Transverse colon (tissue), 4 donors: ENCODE measurements at regions of chr2 and their contacts with region 1.

Region 1: GRCh38 chr2:27442920-27443282 is 720 bp downstream of the KRTCAP3 start:
- DNase-seq: peak; percentile 33
- H3K4me3 ChIP-seq: peak overlapping the region; percentile 7 to 53 (median 38)
- H3K27ac ChIP-seq: peak overlapping the region; percentile 71 to 85 (median 80)
- H3K4me1 ChIP-seq: peaks cover 3 to 28% (median 14%) of the 10 kb centered on the region in 4 donors
- H3K27me3 ChIP-seq: no peaks in the 10 kb centered on the region
- CTCF ChIP-seq: no peak
- EP300 ChIP-seq: no peak
- POLR2A ChIP-seq: no peak

Region 2: DNA sequence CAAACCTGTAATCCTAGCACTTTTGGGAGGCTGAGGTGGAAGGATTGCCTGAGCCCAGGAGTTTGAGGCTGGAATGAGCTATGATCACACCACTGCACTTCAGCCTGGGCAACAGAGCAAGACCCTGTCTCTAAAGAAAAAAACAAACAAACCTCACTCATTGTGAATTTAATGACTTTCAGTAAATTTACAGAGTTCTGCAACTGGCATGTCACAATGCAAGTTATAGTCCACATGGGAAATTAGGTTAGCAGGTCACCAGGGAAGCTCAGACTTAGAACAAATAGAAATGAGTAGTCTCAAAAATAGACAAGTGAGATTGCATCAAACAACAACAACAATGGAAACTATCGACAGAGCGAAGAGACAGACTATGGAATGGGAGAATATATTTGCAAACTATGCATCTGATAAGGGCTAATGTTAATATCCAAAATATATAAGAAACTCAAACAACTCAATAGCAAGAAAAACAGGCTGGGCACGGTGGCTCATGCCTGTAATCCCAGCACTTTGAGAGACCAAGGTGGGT is 21.1 kb before region 1 on chr2:
- in situ Hi-C with region 1: no loop called
- intact Hi-C with region 1: loop called (anchors 1 kb)
- DNase-seq: no peak
- H3K4me3 ChIP-seq: no peak overlapping the region
- H3K27ac ChIP-seq: no peak overlapping the region
- H3K4me1 ChIP-seq: no peaks in the 10 kb centered on the region
- H3K27me3 ChIP-seq: no peaks in the 10 kb centered on the region
- CTCF ChIP-seq: no peak
- EP300 ChIP-seq: no peak
- POLR2A ChIP-seq: no peak

Region 3: DNA sequence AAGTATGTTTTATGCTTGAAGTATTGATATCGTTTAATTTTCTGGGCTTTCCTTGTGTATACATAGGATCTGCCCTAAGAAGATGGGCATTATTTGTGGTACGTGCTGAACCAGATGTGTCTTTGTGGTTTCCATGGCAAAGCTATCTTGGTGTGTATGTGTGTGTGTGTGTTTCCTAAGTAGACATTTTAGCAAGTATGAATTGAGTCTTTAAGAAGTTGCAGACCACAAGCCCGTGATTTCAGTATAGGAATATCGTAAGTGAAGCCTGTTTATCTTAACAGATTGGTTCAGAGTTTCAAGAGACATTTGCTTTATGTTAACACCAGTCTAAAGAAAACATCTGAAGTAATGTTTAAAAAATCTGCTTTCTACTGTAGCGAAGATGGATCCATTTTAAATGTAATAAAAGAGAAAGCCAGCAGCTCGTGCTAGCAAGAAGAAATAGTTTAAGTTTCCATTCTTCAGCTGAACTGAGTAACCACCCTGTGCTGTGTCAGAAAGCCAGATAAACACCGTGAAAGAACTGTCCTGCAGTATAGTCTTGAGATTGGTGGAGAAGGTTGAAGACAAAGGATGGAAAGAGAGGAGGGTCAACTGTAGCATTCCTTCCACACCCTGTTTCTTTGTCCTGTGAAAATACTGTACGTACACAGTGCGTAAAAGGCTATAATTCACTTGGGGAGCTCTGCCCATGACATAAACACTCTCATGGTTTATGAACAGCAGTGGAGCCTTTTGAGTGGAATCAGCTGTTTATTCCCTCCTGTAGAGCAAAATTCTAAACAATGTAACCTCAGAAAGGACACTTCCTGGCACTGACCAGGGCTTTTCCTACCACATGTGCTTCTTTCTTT is 857.8 kb after region 1 on chr2:
- in situ Hi-C with region 1: no loop called
- intact Hi-C with region 1: no loop called
- DNase-seq: no peak
- H3K4me3 ChIP-seq: no peak overlapping the region
- H3K27ac ChIP-seq: peak overlapping the region; percentile 65 to 86 (median 72)
- H3K4me1 ChIP-seq: peaks cover 0 to 12% (median 8%) of the 10 kb centered on the region in 4 donors
- H3K27me3 ChIP-seq: no peaks in the 10 kb centered on the region
- CTCF ChIP-seq: no peak
- EP300 ChIP-seq: peak; percentile 94
- POLR2A ChIP-seq: no peak